ENCODE measurements at regions of chr17 and their contacts with region 1.

Region 1: GRCh38 chr17:7435221-7435675 is at the start of gene TMEM102:
- DNase-seq: peak; percentile 99
- ATAC-seq: peak; percentile 87
- H3K4me3 ChIP-seq: peak within 1 kb of the TSS; percentile 77 to 93 (median 79)
- H3K4me3 Mint-ChIP-seq: peak within 1 kb of the TSS; percentile 96
- H3K27ac ChIP-seq: peak within 1 kb of the TSS; percentile 80 to 82
- H3K27ac Mint-ChIP-seq: peak within 1 kb of the TSS; percentile 94
- H3K4me1 ChIP-seq: peaks cover 41 to 45% of the 10 kb centered on the region in 2 donors
- H3K4me1 Mint-ChIP-seq: peaks cover 43% of the 10 kb centered on the region
- H3K27me3 ChIP-seq: peaks cover 0 to 24% (median 17%) of the 10 kb centered on the region in 4 experiments
- H3K27me3 Mint-ChIP-seq: peaks cover 17% of the 10 kb centered on the region
- CTCF ChIP-seq: no peak
- total RNA-seq, gene TMEM102: 17.7 and 19.1 TPM in 2 replicates

Region 2: GRCh38 chr17:7214300-7215135 is 220.7 kb before region 1 on chr17:
- CTCF ChIA-PET with region 1: no interaction called
- POLR2A ChIA-PET with region 1: no interaction called
- intact Hi-C with region 1: loop called (anchors 1 kb)
- DNase-seq: peak; percentile 99
- ATAC-seq: peak; percentile 85
- H3K4me3 ChIP-seq: peak overlapping the region; percentile 39 to 66 (median 53)
- H3K4me3 Mint-ChIP-seq: peak overlapping the region; percentile 97
- H3K27ac ChIP-seq: peak overlapping the region; percentile 77 to 90
- H3K27ac Mint-ChIP-seq: peak overlapping the region; percentile 99
- H3K4me1 ChIP-seq: peaks cover 25 to 50% of the 10 kb centered on the region in 2 donors
- H3K4me1 Mint-ChIP-seq: peaks cover 49% of the 10 kb centered on the region
- H3K27me3 ChIP-seq: peaks cover 0 to 4% (median 0%) of the 10 kb centered on the region in 4 experiments
- H3K27me3 Mint-ChIP-seq: peaks cover 5% of the 10 kb centered on the region
- CTCF ChIP-seq: peak; percentile 44

Region 3: DNA sequence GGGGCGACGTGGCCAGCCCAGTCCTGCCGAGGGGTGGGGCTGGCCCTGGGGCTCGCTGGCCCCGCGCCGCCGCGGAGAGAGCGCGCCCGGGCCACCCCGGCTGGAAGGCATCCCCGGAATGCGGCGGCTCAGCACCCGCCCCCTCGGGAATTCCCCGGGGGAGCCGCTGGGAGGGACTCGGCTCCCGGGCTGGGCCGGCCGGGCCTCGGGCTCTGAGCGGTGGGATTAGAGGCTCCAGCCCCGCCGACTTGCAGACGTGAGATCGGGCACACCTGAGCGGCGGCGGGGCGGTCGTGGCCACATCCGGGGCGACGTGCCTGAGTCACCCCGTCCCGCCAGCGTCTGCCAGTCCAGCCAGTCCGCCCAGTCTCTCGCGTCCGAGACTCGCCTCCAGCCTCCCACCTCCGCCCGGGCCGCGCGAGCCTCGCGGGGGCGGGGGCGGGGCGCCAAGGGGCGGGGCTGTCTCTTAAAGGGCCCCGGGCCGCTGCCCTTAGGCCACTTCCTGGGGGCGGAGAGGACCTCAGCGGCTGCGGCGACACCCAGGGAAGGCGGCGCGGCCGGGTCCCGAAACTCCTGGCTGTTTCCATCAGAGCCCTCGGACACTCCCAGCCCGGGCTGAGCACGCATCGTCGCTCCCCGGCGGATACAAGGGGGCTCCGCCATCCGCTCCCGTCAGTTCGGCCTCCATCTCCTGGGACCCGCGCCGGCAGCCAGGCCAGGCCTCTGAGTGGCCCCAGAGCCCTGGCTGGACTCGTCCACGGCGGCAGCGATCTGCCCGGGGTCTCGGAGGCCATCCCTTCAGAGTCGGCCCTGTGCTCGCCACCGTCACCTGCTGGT is 83.4 kb before region 1 on chr17 and contains the start of gene KCTD11:
- CTCF ChIA-PET with region 1: interaction called, 43 read pairs
- POLR2A ChIA-PET with region 1: interaction called, 3 read pairs
- intact Hi-C with region 1: loop called (anchors 1 kb)
- DNase-seq: peak; percentile 78
- ATAC-seq: peak; percentile 67
- H3K4me3 ChIP-seq: peak within 1 kb of the TSS; percentile 35 to 92 (median 84)
- H3K4me3 Mint-ChIP-seq: peak within 1 kb of the TSS; percentile 94
- H3K27ac ChIP-seq: peak within 1 kb of the TSS; percentile 63 to 90
- H3K27ac Mint-ChIP-seq: peak within 1 kb of the TSS; percentile 91
- H3K4me1 ChIP-seq: peaks cover 14 to 41% of the 10 kb centered on the region in 2 donors
- H3K4me1 Mint-ChIP-seq: peaks cover 38% of the 10 kb centered on the region
- H3K27me3 ChIP-seq: no peaks in the 10 kb centered on the region
- H3K27me3 Mint-ChIP-seq: no peaks in the 10 kb centered on the region
- CTCF ChIP-seq: peak; percentile 50
- total RNA-seq, gene KCTD11: 13.4 and 15.4 TPM in 2 replicates

Region 4: DNA sequence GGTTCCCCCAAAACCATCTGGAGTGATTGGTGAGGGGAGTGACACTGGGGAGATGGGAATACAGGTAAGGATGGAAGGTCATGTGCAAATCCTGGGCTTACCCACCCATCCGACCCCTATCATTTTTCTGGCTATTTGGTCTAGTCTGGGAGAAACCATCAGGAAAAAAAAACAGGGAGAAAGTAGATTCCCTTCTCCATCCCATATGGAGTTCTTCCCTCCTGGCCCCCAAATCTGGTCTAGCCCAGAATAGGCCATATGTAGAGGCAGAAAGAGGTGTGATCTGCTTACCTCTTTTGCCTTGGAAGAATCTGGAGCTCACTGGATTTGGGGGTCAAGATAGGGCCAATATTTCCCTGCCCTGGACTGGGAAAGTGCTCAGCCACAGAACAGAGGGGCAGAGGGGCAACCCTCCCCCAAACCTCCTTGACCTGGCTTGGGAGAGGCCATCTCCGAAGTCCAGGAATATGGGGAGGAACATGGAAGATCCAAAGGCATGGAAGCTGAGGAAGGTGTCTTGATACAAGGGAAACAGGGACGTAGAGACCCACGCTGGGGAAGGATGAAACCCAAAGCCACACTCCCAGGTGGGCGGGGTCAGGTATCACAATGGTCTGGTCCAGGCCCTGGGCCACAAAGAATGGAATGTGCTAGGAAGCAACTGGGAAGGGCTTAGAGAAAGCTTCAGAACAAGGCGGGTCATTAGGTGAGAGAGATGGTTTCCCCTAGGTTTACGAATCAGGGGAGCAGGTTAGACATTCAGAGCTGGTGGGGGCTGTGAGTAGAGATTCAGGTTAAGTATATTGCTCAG is 25.8 kb after region 1 on chr17:
- CTCF ChIA-PET with region 1: interaction called, 35 read pairs
- POLR2A ChIA-PET with region 1: interaction called, 10 read pairs
- intact Hi-C with region 1: no loop called
- DNase-seq: no peak
- ATAC-seq: no peak
- H3K4me3 ChIP-seq: no peak overlapping the region
- H3K4me3 Mint-ChIP-seq: no peak overlapping the region
- H3K27ac ChIP-seq: no peak overlapping the region
- H3K27ac Mint-ChIP-seq: no peak overlapping the region
- H3K4me1 ChIP-seq: peaks cover 5 to 6% of the 10 kb centered on the region in 2 donors
- H3K4me1 Mint-ChIP-seq: peaks cover 5% of the 10 kb centered on the region
- H3K27me3 ChIP-seq: no peaks in the 10 kb centered on the region
- H3K27me3 Mint-ChIP-seq: no peaks in the 10 kb centered on the region
- CTCF ChIP-seq: no peak

Region 5: GRCh38 chr17:7515911-7516610 is 80.8 kb after region 1 on chr17:
- CTCF ChIA-PET with region 1: interaction called, 18 read pairs
- POLR2A ChIA-PET with region 1: no interaction called
- intact Hi-C with region 1: no loop called
- DNase-seq: no peak
- ATAC-seq: no peak
- H3K4me3 ChIP-seq: no peak overlapping the region
- H3K4me3 Mint-ChIP-seq: no peak overlapping the region
- H3K27ac ChIP-seq: no peak overlapping the region
- H3K27ac Mint-ChIP-seq: no peak overlapping the region
- H3K4me1 ChIP-seq: no peaks in the 10 kb centered on the region
- H3K4me1 Mint-ChIP-seq: no peaks in the 10 kb centered on the region
- H3K27me3 ChIP-seq: no peaks in the 10 kb centered on the region
- H3K27me3 Mint-ChIP-seq: no peaks in the 10 kb centered on the region
- CTCF ChIP-seq: no peak

Region 6: DNA sequence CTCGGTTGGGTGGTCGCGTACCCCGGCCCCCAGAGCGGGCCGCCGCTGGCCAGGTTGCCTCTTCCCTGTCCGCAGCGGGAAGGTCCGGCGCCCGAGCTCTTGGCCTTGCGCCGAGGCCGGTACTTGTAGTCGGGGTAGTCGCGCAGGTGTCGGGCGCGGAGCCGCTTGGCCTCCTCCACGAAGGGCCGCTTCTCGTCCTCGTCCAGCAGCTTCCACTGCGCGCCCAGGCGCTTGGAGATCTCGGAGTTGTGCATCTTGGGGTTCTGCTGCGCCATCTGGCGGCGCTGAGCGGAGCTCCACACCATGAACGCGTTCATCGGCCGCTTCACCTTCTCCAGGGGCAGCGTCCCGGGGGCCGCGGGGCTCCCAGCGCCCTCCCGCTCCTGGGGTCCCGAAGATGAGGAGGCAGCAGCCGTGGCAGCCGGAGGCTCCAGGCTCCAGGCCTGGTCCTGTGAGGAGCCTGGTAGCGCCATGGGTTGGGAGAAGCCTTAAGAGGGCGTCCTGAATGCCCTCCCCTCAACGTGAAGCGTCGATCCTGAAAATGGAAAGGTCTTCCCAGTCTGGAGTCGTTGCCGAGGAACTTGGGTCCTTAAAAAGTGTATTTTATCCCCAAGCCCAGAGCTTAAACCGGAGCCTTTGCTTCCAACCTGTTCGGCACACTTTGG is 154.1 kb after region 1 on chr17:
- CTCF ChIA-PET with region 1: interaction called, 15 read pairs
- POLR2A ChIA-PET with region 1: interaction called, 6 read pairs
- intact Hi-C with region 1: no loop called
- DNase-seq: peak; percentile 84
- ATAC-seq: peak; percentile 86
- H3K4me3 ChIP-seq: no peak overlapping the region
- H3K4me3 Mint-ChIP-seq: no peak overlapping the region
- H3K27ac ChIP-seq: no peak overlapping the region
- H3K27ac Mint-ChIP-seq: no peak overlapping the region
- H3K4me1 ChIP-seq: peaks cover 7 to 21% of the 10 kb centered on the region in 2 donors
- H3K4me1 Mint-ChIP-seq: peaks cover 10% of the 10 kb centered on the region
- H3K27me3 ChIP-seq: no peaks in the 10 kb centered on the region
- H3K27me3 Mint-ChIP-seq: no peaks in the 10 kb centered on the region
- CTCF ChIP-seq: peak; percentile 91

Region 7: GRCh38 chr17:7834962-7835813 is 399.9 kb after region 1 on chr17:
- CTCF ChIA-PET with region 1: no interaction called
- POLR2A ChIA-PET with region 1: no interaction called
- intact Hi-C with region 1: no loop called
- DNase-seq: peak; percentile 96
- ATAC-seq: peak; percentile 44
- H3K4me3 ChIP-seq: peak overlapping the region; percentile 42 to 99 (median 95)
- H3K4me3 Mint-ChIP-seq: peak overlapping the region; percentile 99
- H3K27ac ChIP-seq: peak overlapping the region; percentile 93 to 100
- H3K27ac Mint-ChIP-seq: peak overlapping the region; percentile 97
- H3K4me1 ChIP-seq: peaks cover 38 to 56% of the 10 kb centered on the region in 2 donors
- H3K4me1 Mint-ChIP-seq: peaks cover 46% of the 10 kb centered on the region
- H3K27me3 ChIP-seq: peaks cover 0 to 13% (median under 1%) of the 10 kb centered on the region in 4 experiments
- H3K27me3 Mint-ChIP-seq: peaks cover 15% of the 10 kb centered on the region
- CTCF ChIP-seq: peak; percentile 86